ENCODE measurements at regions of chr1 and their contacts with region 1.

Region 1: DNA sequence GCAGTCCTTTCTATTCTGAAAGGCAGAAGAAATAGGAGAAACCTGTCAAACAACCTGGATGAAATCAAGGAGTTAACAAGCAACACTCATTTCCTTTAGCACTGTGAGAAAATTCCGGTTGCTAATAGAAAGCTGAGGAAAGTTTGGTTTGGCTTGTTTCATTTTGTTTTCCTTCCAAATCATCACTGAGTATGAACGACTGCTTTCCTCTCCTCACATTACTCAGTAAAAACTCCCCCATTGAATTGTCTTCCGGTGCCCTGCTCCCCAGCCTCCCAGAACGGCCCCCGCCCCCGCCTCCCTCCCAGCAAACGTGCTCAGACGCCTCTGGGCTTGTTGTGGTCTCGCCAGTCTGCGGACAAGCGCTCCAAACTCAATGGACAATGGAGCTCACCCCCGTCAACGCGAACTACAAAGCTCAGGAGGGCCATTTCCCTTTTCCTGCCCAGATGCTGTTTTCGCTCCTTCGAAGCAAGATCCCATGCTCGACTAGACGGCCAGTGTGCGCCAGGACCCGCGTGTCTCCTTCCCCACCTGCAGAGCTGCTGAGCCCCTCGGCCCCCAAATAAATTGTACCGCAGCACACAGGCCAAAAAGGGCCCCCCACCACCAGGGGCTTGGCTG is 747 bp downstream of the STX6 start:
- DNase-seq: peak; percentile 84
- H3K4me3 Mint-ChIP-seq: peak overlapping the region; percentile 96
- H3K27ac Mint-ChIP-seq: peak overlapping the region; percentile 96
- H3K4me1 Mint-ChIP-seq: peaks cover 38% of the 10 kb centered on the region
- H3K27me3 Mint-ChIP-seq: peaks cover 21% of the 10 kb centered on the region

Region 2: GRCh38 chr1:180502360-180503273 is 519.3 kb before region 1 on chr1 and contains the start of gene ACBD6:
- intact Hi-C with region 1: loop called (anchors 5 kb)
- DNase-seq: peak; percentile 96
- H3K4me3 Mint-ChIP-seq: peak within 1 kb of the TSS; percentile 97
- H3K27ac Mint-ChIP-seq: peak within 1 kb of the TSS; percentile 97
- H3K4me1 Mint-ChIP-seq: peaks cover 20% of the 10 kb centered on the region
- H3K27me3 Mint-ChIP-seq: peaks cover 5% of the 10 kb centered on the region
- total RNA-seq, gene ACBD6: 49.8 and 54.7 TPM in 2 replicates

Region 3: DNA sequence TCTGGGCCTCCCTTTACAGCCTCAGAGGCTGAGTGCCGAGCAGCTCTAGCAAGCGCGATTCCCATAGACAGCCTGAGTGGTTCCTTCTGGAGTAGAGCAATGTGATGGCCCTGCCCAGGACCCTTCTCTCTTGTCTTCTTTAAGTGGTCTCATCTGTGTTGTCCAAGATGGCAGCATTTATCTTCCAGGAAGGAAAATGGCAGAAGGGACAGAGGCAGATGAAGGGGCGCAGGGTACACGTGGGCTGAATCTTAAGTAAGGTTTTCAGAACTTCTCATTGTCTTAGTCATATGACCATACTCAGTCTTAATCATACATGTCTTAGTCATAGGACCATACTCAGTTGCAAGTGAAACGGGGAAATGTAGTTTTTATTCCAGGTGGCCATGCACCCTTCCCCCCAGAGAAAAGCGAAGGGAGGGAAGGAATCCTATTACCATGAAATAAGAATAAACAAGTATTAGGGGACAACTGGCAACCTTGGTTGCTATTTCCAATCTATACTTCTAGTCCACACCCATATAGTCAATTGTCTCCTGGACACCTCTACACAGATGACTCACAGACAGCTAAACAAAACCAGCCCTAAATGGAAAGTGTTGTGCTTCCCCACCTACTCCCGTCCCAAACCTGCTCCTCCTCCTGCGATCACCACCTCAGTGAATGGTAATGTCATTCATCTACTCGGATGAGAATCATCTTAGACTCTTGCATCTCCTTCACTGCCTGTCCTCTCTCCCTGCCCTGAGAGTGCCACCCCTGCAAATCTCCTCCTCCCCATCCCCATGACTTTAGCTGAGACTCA is 449.9 kb before region 1 on chr1:
- intact Hi-C with region 1: loop called (anchors 5 kb)
- DNase-seq: peak; percentile 65
- H3K4me3 Mint-ChIP-seq: peak overlapping the region; percentile 38
- H3K27ac Mint-ChIP-seq: peak overlapping the region; percentile 73
- H3K4me1 Mint-ChIP-seq: peaks cover 22% of the 10 kb centered on the region
- H3K27me3 Mint-ChIP-seq: peaks cover 11% of the 10 kb centered on the region

Region 4: GRCh38 chr1:181033799-181034451 is 12.0 kb after region 1 on chr1 and contains the start of gene MR1:
- intact Hi-C with region 1: loop called (anchors 1 kb)
- DNase-seq: peak; percentile 88
- H3K4me3 Mint-ChIP-seq: peak within 1 kb of the TSS; percentile 96
- H3K27ac Mint-ChIP-seq: peak within 1 kb of the TSS; percentile 97
- H3K4me1 Mint-ChIP-seq: peaks cover 51% of the 10 kb centered on the region
- H3K27me3 Mint-ChIP-seq: peaks cover 5% of the 10 kb centered on the region
- total RNA-seq, gene MR1: 14.6 and 16.2 TPM in 2 replicates

Region 5: DNA sequence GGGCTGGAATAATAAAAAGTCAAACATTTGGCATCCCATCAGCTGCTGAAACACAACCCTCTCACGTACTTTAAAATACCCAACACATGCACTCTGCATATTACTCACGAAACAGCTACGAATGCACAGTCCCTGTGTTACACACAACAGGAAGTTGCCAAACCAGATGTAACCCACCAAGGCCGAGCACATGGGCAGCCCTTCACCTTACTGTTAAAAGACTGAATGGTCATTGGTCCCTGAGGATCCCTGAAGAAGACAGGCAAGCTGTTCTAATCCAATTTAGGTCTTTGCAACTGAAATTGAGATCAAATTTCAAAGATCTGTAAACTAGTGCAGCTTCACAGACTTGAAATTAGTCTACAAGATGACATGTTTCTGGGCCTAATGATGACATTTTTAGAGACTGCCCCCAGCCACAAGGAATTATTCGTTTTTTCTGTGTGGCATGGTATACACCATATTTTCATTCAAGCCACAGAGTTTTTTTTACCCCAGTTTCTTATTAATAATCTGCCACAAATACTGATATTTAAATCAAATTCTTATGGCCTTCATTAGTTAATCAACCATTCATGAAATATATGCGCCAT is 41.0 kb after region 1 on chr1:
- intact Hi-C with region 1: loop called (anchors 2 kb)
- DNase-seq: peak; percentile 78
- H3K4me3 Mint-ChIP-seq: peak overlapping the region; percentile 76
- H3K27ac Mint-ChIP-seq: peak overlapping the region; percentile 86
- H3K4me1 Mint-ChIP-seq: peaks cover 20% of the 10 kb centered on the region
- H3K27me3 Mint-ChIP-seq: peaks cover 2% of the 10 kb centered on the region

Region 6: GRCh38 chr1:181099152-181100014 is 77.5 kb after region 1 on chr1:
- intact Hi-C with region 1: loop called (anchors 1 kb)
- DNase-seq: peak; percentile 83
- H3K4me3 Mint-ChIP-seq: peak overlapping the region; percentile 79
- H3K27ac Mint-ChIP-seq: peak overlapping the region; percentile 96
- H3K4me1 Mint-ChIP-seq: peaks cover 83% of the 10 kb centered on the region
- H3K27me3 Mint-ChIP-seq: no peaks in the 10 kb centered on the region

Region 7: GRCh38 chr1:181219938-181220337 is 198.0 kb after region 1 on chr1:
- intact Hi-C with region 1: no loop called
- DNase-seq: no peak
- H3K4me3 Mint-ChIP-seq: no peak overlapping the region
- H3K27ac Mint-ChIP-seq: no peak overlapping the region
- H3K4me1 Mint-ChIP-seq: no peaks in the 10 kb centered on the region
- H3K27me3 Mint-ChIP-seq: peaks cover 2% of the 10 kb centered on the region